Activated T-helper 2 cell treated with anti-CD3 and anti-CD28 coated beads, Interferon-gamma antibody, Interleukin-2, Interleukin-4, amounts not matched to agents 10 μg/mL and 5 μg/mL and 100 μg/mL, durations not matched to agents 14 hours and 24 hours and 36 hours (primary cell): ENCODE measurements at regions of chr19 and their contacts with region 1.

Region 1: GRCh38 chr19:29873024-29873800 is 61.4 kb downstream of the CCNE1 start:
- DNase-seq: peak; percentile 58
- H3K4me3 Mint-ChIP-seq: peak overlapping the region; percentile 71
- H3K27ac Mint-ChIP-seq: no peak overlapping the region
- H3K4me1 Mint-ChIP-seq: peaks cover 11% of the 10 kb centered on the region
- H3K27me3 Mint-ChIP-seq: peaks cover 24% of the 10 kb centered on the region

Region 2: GRCh38 chr19:29552454-29553280 is 320.5 kb before region 1 on chr19:
- intact Hi-C with region 1: no loop called
- DNase-seq: no peak
- H3K4me3 Mint-ChIP-seq: no peak overlapping the region
- H3K27ac Mint-ChIP-seq: no peak overlapping the region
- H3K4me1 Mint-ChIP-seq: no peaks in the 10 kb centered on the region
- H3K27me3 Mint-ChIP-seq: peaks cover 15% of the 10 kb centered on the region

Region 3: DNA sequence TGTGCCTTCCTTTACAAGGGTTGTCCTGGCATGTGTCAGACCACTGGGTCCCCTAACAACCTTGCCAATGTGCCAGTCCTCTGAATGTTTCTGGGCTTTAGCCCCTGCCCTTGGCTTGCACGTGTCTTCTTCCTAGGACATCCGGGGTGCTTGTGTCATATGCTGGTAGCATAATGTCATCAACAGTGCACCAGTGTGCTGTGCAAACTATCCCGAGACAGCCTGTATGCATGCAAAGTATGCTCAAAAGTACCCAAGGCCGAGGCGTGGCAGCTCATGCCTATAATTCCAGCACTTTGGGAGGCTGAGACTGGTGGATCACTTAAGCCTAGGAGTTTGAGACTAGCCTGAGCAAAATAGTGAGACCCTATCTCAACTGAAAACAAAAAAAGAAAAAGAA is 137.4 kb before region 1 on chr19:
- intact Hi-C with region 1: loop called (anchors 1 kb)
- DNase-seq: no peak
- H3K4me3 Mint-ChIP-seq: no peak overlapping the region
- H3K27ac Mint-ChIP-seq: no peak overlapping the region
- H3K4me1 Mint-ChIP-seq: no peaks in the 10 kb centered on the region
- H3K27me3 Mint-ChIP-seq: peaks cover 9% of the 10 kb centered on the region

Region 4: DNA sequence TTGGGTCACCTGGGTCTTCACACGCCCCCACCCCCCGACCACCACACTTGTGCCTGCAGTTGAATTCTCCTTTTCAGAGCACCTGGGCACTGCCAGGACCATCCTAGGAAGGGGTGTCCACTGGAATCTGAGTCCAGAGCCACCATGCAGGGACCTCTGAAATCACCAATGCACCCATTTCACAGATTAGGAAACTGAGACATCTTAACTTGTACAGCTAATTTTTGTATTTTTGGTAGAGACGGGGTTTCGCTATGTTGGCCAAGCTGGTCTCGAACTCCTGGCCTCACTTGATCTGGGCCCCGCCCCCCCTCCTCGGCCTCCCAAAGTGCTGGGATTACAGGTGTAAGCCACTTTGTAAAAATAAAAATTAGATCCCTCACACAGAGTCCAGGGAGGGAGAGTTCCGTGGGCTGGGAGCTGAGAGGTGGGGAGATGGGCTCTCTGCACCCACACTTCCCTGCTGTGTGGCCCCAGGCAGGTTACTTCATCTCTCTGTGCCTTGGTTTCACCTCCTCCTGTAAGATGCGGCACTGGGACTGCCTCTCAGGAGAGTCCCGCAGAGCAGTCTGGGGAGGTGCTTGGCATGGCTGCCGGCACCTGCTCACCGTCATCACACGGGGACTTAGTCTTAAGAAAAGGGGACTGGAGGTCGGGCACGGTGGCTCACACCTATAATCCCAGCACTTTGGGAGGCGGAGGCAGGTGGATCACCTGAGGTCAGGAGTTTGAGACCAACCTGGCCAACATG is 112.3 kb before region 1 on chr19:
- intact Hi-C with region 1: loop called (anchors 1 kb)
- DNase-seq: no peak
- H3K4me3 Mint-ChIP-seq: peak overlapping the region; percentile 35
- H3K27ac Mint-ChIP-seq: no peak overlapping the region
- H3K4me1 Mint-ChIP-seq: no peaks in the 10 kb centered on the region
- H3K27me3 Mint-ChIP-seq: peaks cover 5% of the 10 kb centered on the region

Region 5: DNA sequence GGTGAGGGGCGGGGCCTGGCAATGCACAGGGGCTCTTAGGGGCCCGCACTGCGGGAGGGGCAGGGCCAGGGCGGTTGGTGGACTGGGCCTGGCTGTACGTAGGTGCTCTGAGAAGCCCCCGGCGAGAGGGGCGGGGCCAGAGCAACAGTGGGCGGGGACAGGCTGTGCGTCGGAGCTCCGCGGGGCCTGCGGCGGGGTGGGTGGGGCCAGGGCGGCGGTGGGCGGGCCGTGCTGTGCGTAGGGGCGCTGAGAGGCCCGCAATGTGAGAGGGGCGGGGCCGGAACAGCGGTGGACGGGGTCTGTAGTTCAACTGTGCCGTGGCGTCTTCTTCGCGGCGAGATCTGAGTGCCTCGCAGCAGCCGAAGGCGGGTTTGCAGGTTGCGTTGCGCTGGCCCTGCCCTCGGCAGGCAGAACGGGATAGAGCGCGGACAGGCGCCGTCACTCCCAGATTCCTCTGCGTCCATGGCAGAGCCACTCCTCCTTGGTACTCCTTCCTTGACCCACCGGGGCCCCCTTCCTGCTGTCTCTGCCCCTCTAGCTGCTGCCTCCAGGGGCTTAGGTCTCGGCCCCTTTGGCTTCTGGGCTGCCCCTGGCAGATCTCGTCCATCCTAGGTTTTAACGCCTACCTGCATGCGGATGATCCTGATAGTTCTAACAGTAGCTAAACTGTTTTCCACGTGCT is 28.2 kb before region 1 on chr19:
- intact Hi-C with region 1: no loop called
- DNase-seq: peak; percentile 93
- H3K4me3 Mint-ChIP-seq: peak overlapping the region; percentile 88
- H3K27ac Mint-ChIP-seq: peak overlapping the region; percentile 80
- H3K4me1 Mint-ChIP-seq: peaks cover 11% of the 10 kb centered on the region
- H3K27me3 Mint-ChIP-seq: peaks cover 9% of the 10 kb centered on the region